Posterior vena cava (tissue), 2 donors: ENCODE measurements at regions of chr11 and their contacts with region 1.

Region 1: GRCh38 chr11:2951231-2952110 is 22.3 kb upstream of the PHLDA2 start:
- DNase-seq: no peak

Region 2: GRCh38 chr11:2902784-2903671 is 48.4 kb before region 1 on chr11:
- intact Hi-C with region 1: no loop called
- DNase-seq: no peak

Region 3: GRCh38 chr11:2929756-2930703 is 21.4 kb before region 1 on chr11:
- intact Hi-C with region 1: no loop called
- DNase-seq: peak; percentile 91

Region 4: GRCh38 chr11:2987881-2988861 is 36.7 kb after region 1 on chr11:
- intact Hi-C with region 1: loop called in 1 of 2 experiments (anchors 2 kb)
- DNase-seq: peak; percentile 44